Colonic mucosa (tissue), 4 donors: ENCODE measurements at regions of chr12 and their contacts with region 1.

Region 1: GRCh38 chr12:22856178-22856577 is 231.2 kb downstream of the ETNK1 start:
- DNase-seq: no peak
- H3K4me3 ChIP-seq: no peak overlapping the region
- H3K27ac ChIP-seq: no peak overlapping the region
- H3K4me1 ChIP-seq: no peaks in the 10 kb centered on the region
- H3K27me3 ChIP-seq: no peaks in the 10 kb centered on the region
- CTCF ChIP-seq: peak; percentile 49

Region 2: DNA sequence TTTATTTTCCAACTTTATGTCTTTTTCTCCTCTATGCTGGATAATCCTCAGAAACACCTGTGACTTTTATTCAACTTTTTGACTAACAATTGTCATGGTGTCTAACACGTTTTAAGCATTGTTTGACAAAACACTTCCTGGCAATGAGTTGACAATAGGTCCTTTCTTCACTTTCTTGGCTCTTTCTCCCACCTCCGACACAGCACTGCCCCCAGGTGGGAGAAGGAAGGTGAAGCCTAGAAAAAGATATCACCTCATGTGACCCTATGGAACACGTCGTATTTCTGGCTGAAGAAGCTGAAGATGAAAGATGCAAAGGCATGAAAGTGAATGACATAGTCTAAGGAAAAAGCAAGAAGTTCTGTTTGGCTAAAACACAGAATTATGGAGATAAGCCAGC is 198.8 kb after region 1 on chr12:
- intact Hi-C with region 1: loop called (anchors 5 kb)
- DNase-seq: peak; percentile 19
- H3K4me3 ChIP-seq: no peak overlapping the region
- H3K27ac ChIP-seq: no peak overlapping the region
- H3K4me1 ChIP-seq: no peaks in the 10 kb centered on the region
- H3K27me3 ChIP-seq: no peaks in the 10 kb centered on the region
- CTCF ChIP-seq: no peak